Ascending aorta (tissue), 2 donors: ENCODE measurements at regions of chr1 and their contacts with region 1.

Region 1: GRCh38 chr1:61446531-61446991 is 278.4 kb downstream of the TM2D1 start:
- DNase-seq: no peak
- H3K4me3 ChIP-seq: no peak overlapping the region
- H3K27ac ChIP-seq: peak overlapping the region; percentile 83 to 92
- H3K4me1 ChIP-seq: peaks cover 22 to 47% of the 10 kb centered on the region in 2 donors
- H3K27me3 ChIP-seq: no peaks in the 10 kb centered on the region
- CTCF ChIP-seq: no peak

Region 2: DNA sequence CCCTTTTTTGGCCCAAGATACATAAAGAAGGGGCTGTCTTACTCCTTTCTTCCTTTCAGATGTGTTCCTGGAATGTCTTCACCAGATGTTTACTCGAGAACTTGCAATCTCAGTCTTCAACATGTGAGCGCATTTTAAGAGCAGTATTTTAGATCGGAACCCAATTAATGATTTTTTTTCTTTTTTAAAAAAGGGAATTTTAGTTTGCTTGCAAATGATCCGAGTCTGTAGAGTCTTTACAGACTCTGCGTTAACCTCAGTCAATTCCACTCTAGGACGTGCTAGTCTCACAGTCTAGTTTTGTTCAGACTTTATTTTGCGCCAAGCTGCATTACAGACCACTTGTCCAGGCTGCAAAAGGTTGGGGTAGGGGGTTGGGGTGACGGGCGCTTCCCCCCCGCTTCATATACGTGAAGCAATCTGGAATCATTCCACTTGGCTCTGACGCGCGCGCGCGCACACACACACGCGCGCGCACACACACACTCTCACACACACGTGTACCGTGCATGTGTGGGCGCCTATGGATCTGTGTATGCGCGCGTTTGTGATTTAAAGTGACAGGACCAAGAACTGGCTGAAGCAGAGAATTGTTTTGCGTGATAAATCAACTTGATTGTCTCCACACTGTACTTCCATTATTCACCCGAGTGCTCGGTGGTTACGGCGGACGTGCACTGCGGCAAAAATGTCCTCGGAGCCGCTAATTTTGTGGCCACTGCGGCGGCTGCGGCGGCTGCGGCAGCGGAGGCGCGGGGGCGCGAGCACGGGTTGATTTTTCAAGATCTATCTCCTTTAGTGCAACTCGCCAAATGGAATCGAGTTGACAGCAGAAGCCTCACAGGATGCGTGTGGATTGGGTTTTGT is 389.8 kb before region 1 on chr1:
- intact Hi-C with region 1: no loop called
- DNase-seq: peak in 1 of 2 donors; percentile 77
- H3K4me3 ChIP-seq: peak overlapping the region; percentile 75 to 82
- H3K27ac ChIP-seq: peak overlapping the region; percentile 97 to 98
- H3K4me1 ChIP-seq: peaks cover 3 to 27% of the 10 kb centered on the region in 2 donors
- H3K27me3 ChIP-seq: no peaks in the 10 kb centered on the region
- CTCF ChIP-seq: peak in 1 of 3 experiments; percentile 1

Region 3: GRCh38 chr1:61279570-61279969 is 167.0 kb before region 1 on chr1:
- intact Hi-C with region 1: no loop called
- DNase-seq: no peak
- H3K4me3 ChIP-seq: peak overlapping the region in 1 of 2 donors; percentile 10
- H3K27ac ChIP-seq: peak overlapping the region; percentile 68 to 76
- H3K4me1 ChIP-seq: peaks cover 0 to 27% of the 10 kb centered on the region in 2 donors
- H3K27me3 ChIP-seq: no peaks in the 10 kb centered on the region
- CTCF ChIP-seq: no peak

Region 4: DNA sequence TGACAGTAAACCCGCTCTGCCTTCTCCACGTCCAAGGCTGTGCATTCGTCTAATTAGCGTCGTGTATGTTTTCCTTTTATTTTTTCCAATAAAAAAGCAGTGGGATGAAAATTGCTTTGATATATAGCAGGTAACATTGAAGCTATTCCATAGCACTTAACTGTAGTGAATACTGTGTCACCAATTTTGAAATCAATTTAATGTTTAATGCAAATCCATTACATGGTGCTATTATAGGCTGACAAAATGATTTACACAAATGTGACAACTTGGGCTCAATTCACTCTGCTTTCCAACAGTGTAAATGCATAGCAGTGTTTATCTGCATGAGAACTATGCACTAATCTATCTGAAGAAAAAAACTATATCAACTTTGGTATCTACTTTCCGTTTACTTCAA is 13.6 kb after region 1 on chr1:
- intact Hi-C with region 1: loop called (anchors 1 kb)
- DNase-seq: no peak
- H3K4me3 ChIP-seq: no peak overlapping the region
- H3K27ac ChIP-seq: no peak overlapping the region
- H3K4me1 ChIP-seq: peaks cover 0 to 4% of the 10 kb centered on the region in 2 donors
- H3K27me3 ChIP-seq: no peaks in the 10 kb centered on the region
- CTCF ChIP-seq: no peak

Region 5: DNA sequence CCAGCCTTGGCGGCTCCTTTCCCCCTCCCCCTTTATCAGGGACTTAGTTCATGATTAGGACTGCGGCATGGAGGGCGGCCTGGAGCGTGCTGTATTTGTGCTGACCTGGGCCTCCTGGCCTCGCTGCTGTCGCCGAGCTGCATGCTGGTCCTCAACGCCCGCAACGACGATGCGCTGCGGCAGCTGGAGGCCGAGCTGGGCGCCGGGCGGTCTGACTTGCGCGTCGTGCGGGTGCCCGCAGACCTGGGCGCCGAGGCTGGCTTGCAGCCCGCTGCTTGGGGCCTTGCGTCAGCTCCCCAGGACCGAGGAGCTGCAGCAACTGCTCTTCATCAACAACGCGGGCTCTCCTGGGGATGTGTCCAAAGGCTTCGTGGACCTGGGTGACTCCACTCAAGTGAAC is 207.5 kb after region 1 on chr1:
- intact Hi-C with region 1: no loop called
- DNase-seq: no peak
- H3K4me3 ChIP-seq: no peak overlapping the region
- H3K27ac ChIP-seq: no peak overlapping the region
- H3K4me1 ChIP-seq: no peaks in the 10 kb centered on the region
- H3K27me3 ChIP-seq: no peaks in the 10 kb centered on the region
- CTCF ChIP-seq: no peak